Left cardiac atrium (tissue), 4 donors: ENCODE measurements at regions of chr12 and their contacts with region 1.

Region 1: DNA sequence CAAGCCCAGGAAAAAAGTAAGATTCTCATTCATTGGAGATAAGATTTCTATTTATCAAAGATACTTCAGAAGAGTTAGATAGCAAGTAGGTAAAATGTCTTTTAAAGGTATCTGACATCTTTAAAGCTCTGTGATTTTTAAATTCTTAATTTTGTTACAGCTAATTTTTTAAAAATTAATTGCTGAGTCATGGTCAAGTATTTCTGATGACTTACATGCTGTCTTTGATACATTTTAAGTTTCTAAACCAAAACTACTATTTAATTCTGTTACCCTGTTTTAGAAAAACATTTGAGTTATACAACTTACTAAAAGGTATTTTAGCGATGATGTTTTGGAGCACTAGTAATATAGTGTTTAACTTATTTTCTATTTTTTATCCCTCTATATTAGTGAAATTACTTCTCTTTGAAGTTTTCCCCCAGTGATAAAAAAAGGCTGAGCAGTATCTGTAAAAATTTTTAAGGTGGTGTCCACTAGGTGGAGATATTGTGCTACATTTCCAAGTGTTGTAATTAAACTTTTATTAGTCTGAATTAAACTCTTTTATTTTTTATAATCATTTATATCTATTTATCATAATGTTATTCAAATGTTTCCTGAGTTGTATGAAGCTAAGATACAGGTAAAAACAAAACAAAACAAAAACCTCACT is 11.5 kb downstream of the ALG10 start:
- DNase-seq: no peak
- ATAC-seq: no peak

Region 2: DNA sequence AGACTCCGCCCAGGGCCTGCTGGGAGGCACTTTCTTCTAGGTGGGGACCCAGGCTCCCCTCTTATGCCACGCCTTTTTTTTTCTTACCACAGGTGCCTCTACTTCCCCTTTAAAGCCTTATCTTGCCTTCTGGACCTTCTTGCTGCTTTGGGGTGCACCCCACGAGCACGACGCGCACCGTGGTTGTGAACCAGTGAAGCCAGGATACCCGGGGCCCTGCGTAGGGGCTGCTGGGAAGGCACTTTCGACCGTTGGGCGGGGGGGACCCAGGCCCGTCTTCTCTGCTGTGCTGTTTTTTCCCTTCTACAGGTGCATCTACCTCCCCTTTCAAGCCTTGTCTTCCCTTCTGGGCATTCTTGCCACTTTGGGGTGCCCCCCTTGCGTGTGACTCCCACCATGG is 293.9 kb after region 1 on chr12:
- intact Hi-C with region 1: no loop called
- DNase-seq: no peak
- ATAC-seq: no peak

Region 3: GRCh38 chr12:34625116-34625515 is 591.4 kb after region 1 on chr12:
- intact Hi-C with region 1: loop called in 1 of 2 experiments (anchors 10 kb)
- DNase-seq: no peak
- ATAC-seq: no peak